ENCODE measurements at regions of chr11 and their contacts with region 1.

Region 1: DNA sequence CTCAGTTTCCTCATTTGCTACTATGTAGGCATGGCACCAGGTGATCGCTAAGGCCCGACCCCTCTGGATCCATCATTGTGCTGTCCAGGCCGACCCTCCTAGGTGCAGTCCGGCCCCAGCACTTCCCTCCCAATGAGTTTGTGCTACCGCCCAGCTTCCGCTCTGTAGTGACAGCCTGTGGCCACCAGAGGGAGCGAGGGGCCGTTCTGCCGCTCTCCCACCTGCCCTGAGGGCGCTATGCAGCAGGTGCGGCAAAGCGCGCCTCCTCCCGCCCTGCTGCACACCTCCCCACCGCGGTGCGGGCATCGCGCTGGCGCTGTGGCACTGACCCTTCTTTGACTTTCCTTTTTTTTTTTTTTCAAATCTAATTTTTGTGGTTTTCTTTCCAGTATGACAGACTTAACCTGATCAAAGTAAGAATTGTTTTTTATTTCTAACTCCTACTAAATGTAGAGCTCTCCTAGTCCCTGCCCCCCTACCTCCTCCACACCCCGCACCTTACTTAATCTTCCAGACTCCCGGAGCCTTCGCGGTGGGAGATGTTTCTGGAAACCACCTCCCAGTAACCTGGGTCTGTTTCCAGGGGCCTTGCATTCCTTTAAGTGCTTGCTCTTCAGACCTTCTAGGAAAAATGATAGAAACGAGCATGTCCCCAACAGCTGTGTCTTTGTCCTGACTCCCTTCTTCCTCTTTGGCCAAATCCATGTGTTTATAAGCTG is 73.7 kb downstream of the SCN3B start:
- DNase-seq: peak; percentile 84 to 92
- H3K4me3 ChIP-seq: no peak overlapping the region
- H3K27ac ChIP-seq: no peak overlapping the region
- H3K4me1 ChIP-seq: peaks cover 5 to 35% (median 27%) of the 10 kb centered on the region in 4 donors
- H3K27me3 ChIP-seq: peaks cover 0 to 9% (median 0%) of the 10 kb centered on the region in 3 donors
- CTCF ChIP-seq: peak in 5 of 7 experiments; percentile 91 to 98 (median 97)
- EP300 ChIP-seq: no peak
- POLR2A ChIP-seq: no peak

Region 2: GRCh38 chr11:123560006-123560405 is 20.7 kb before region 1 on chr11:
- intact Hi-C with region 1: no loop called
- DNase-seq: peak; percentile 46 to 90
- H3K4me3 ChIP-seq: peak overlapping the region; percentile 36 to 42 (median 41)
- H3K27ac ChIP-seq: peak overlapping the region in 3 of 5 donors; percentile 3 to 74 (median 46)
- H3K4me1 ChIP-seq: peaks cover 12 to 33% (median 23%) of the 10 kb centered on the region in 4 donors
- H3K27me3 ChIP-seq: no peaks in the 10 kb centered on the region
- CTCF ChIP-seq: no peak
- EP300 ChIP-seq: no peak
- POLR2A ChIP-seq: no peak

Region 3: GRCh38 chr11:123624974-123625373 is 44.3 kb after region 1 on chr11:
- intact Hi-C with region 1: no loop called
- DNase-seq: no peak
- H3K4me3 ChIP-seq: no peak overlapping the region
- H3K27ac ChIP-seq: no peak overlapping the region
- H3K4me1 ChIP-seq: peaks cover 0 to 12% (median 0%) of the 10 kb centered on the region in 4 donors
- H3K27me3 ChIP-seq: no peaks in the 10 kb centered on the region
- CTCF ChIP-seq: no peak
- EP300 ChIP-seq: no peak
- POLR2A ChIP-seq: no peak

Region 4: GRCh38 chr11:123707606-123708205 is 127.0 kb after region 1 on chr11:
- intact Hi-C with region 1: loop called (anchors 5 kb)
- DNase-seq: peak; percentile 59 to 91
- H3K4me3 ChIP-seq: no peak overlapping the region
- H3K27ac ChIP-seq: no peak overlapping the region
- H3K4me1 ChIP-seq: no peaks in the 10 kb centered on the region
- H3K27me3 ChIP-seq: peaks cover 0 to 23% (median 0%) of the 10 kb centered on the region in 3 donors
- CTCF ChIP-seq: peak in 5 of 7 experiments; percentile 14 to 67 (median 44)
- EP300 ChIP-seq: no peak
- POLR2A ChIP-seq: no peak